ENCODE measurements at regions of chr3 and their contacts with region 1.

Region 1: GRCh38 chr3:38205472-38205805 is 40.1 kb downstream of the OXSR1 start:
- DNase-seq: peak; percentile 16
- H3K4me3 Mint-ChIP-seq: peak overlapping the region; percentile 14
- H3K27ac Mint-ChIP-seq: peak overlapping the region; percentile 80
- H3K4me1 Mint-ChIP-seq: peaks cover 62% of the 10 kb centered on the region
- H3K27me3 Mint-ChIP-seq: no peaks in the 10 kb centered on the region

Region 2: GRCh38 chr3:38190481-38190881 is 15.0 kb before region 1 on chr3:
- intact Hi-C with region 1: loop called (anchors 1 kb)
- DNase-seq: no peak
- H3K4me3 Mint-ChIP-seq: no peak overlapping the region
- H3K27ac Mint-ChIP-seq: peak overlapping the region; percentile 21
- H3K4me1 Mint-ChIP-seq: peaks cover 11% of the 10 kb centered on the region
- H3K27me3 Mint-ChIP-seq: no peaks in the 10 kb centered on the region

Region 3: DNA sequence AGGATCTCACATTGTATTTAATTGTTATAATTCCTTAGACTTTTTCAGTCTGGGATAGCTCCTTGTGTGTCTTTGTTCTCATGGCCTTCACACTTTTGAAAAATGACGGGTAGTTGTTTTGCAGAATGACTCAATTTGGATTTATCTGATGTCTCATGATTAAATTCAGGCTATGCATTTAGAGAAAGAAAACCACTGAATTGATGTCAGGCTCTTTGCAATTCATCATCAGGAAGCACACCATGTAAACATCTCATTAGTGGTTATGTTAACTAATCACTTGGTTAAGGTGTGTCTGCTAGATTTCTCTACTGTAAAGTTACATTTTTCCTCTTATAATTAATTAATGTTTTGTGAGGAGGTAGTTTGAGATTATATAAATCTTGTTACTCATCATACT is 52.1 kb after region 1 on chr3:
- intact Hi-C with region 1: loop called (anchors 5 kb)
- DNase-seq: no peak
- H3K4me3 Mint-ChIP-seq: no peak overlapping the region
- H3K27ac Mint-ChIP-seq: no peak overlapping the region
- H3K4me1 Mint-ChIP-seq: peaks cover 36% of the 10 kb centered on the region
- H3K27me3 Mint-ChIP-seq: no peaks in the 10 kb centered on the region

Region 4: DNA sequence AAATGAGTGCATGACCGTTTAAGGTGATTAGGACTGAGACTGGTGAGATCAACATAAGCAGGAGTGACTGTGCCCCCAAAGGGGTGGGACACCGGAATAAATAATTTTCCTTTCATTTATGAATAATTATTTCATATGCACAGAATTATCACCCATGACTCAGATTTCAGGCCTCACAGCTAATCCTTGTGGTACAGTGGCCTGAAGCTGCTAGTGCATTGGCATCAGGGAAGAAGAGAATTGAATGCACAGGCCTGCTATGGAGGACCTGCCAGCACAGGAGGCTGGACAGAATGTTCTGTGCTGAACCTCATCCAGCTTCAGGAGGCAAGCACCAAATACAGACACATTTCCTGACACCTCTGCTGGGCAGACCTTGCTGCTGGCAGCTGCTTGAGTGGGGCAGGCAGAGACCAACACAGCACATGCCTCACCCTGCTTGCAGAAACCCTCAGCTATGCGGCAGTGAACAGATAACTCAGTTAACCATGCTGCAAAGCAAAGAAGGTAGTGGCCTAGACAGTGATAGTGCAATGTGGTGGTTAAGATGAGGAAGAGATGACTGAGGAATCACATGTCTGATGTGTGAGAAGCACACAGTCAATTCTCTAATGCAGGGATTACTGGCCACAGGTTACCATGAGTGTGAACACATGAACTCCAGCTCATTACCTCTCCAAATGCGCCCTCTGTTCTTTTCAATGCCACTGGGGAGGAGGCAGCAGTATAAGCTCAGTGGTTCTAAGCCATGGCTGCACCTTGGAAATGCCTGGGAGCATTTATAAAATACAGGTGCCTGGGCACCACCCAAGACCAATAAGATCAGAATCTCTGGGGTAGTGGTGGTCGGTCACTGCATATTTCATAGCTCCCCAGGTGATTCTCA is 512.2 kb after region 1 on chr3:
- intact Hi-C with region 1: no loop called
- DNase-seq: no peak
- H3K4me3 Mint-ChIP-seq: no peak overlapping the region
- H3K27ac Mint-ChIP-seq: no peak overlapping the region
- H3K4me1 Mint-ChIP-seq: no peaks in the 10 kb centered on the region
- H3K27me3 Mint-ChIP-seq: no peaks in the 10 kb centered on the region